AG04449 (cell line): ENCODE measurements at regions of chr22 and their contacts with region 1.

Region 1: GRCh38 chr22:46798366-46799350 is 36.2 kb downstream of the TBC1D22A start:
- DNase-seq: no peak
- H3K4me3 ChIP-seq: no peak overlapping the region
- CTCF ChIP-seq: peak; percentile 99

Region 2: DNA sequence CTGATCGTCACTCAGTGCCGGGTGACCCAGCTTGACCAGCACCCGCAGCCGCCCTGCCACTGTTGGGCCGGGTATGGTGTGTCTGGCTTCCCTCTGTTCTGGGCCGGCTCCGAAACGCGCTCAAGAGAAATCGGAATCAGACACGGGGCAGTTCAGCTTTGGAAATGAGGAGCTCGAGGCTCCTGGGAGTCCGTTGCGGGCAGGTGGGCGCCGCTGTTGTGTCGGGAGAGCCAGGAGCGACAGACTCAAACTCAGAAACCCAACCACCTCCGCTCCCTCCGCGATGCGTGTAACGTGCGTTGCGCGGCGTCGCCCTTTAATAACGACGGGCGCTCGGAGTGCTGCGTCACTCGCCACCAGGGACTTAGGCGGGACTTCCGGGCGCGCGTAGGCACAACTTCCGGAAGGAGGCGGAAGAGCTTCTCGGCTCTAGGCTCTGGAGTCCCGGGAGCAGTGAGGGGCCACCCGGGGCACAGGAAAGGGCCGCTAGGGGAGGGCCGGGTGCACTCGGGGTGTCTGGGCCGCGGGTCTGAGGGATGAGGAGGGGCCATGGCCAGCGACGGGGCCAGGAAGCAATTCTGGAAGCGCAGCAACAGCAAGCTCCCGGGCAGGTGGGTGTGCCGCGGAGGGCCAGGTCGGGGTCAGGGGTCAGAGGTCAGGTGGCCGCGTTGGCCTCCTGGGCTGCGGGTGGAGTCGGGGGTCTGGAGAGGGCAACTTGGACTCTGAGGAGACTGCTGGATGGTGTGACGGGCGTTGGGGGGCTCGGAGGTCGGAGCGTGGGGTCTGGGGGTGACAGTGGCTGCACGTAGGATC is 36.2 kb before region 1 on chr22 and contains the start of gene TBC1D22A:
- CTCF ChIA-PET with region 1: interaction called, 12 read pairs
- POLR2A ChIA-PET with region 1: no interaction called
- DNase-seq: no peak
- H3K4me3 ChIP-seq: peak within 1 kb of the TSS; percentile 93
- CTCF ChIP-seq: no peak

Region 3: GRCh38 chr22:46783721-46784120 is 14.9 kb before region 1 on chr22:
- CTCF ChIA-PET with region 1: interaction called, 23 read pairs
- POLR2A ChIA-PET with region 1: no interaction called
- DNase-seq: no peak
- H3K4me3 ChIP-seq: no peak overlapping the region
- CTCF ChIP-seq: no peak

Region 4: GRCh38 chr22:46815896-46816731 is 17.5 kb after region 1 on chr22:
- CTCF ChIA-PET with region 1: interaction called, 161 read pairs
- POLR2A ChIA-PET with region 1: no interaction called
- DNase-seq: no peak
- H3K4me3 ChIP-seq: no peak overlapping the region
- CTCF ChIP-seq: no peak

Region 5: GRCh38 chr22:46829941-46830715 is 31.5 kb after region 1 on chr22:
- CTCF ChIA-PET with region 1: interaction called, 12 read pairs
- POLR2A ChIA-PET with region 1: no interaction called
- DNase-seq: no peak
- H3K4me3 ChIP-seq: peak overlapping the region; percentile 16; the same call in 1 of the 2 replicates
- CTCF ChIP-seq: no peak

Region 6: GRCh38 chr22:46845296-46846149 is 46.9 kb after region 1 on chr22:
- CTCF ChIA-PET with region 1: interaction called, 44 read pairs
- POLR2A ChIA-PET with region 1: no interaction called
- DNase-seq: no peak
- H3K4me3 ChIP-seq: peak overlapping the region; percentile 19
- CTCF ChIP-seq: peak; percentile 11